Activated B cell treated with CpG ODN at 0.5 μM for 24 hours (primary cell): ENCODE measurements at regions of chr1 and their contacts with region 1.

Region 1: GRCh38 chr1:31938174-31938950 is at the start of gene PTP4A2:
- DNase-seq: peak; percentile 88
- ATAC-seq: peak; percentile 78
- H3K4me3 Mint-ChIP-seq: peak within 1 kb of the TSS; percentile 91
- H3K27ac Mint-ChIP-seq: peak within 1 kb of the TSS; percentile 93
- H3K4me1 Mint-ChIP-seq: peaks cover 77% of the 10 kb centered on the region
- H3K27me3 Mint-ChIP-seq: no peaks in the 10 kb centered on the region
- CTCF ChIP-seq: no peak
- total RNA-seq, gene PTP4A2: 249 and 275 TPM in 2 replicates

Region 2: GRCh38 chr1:31815752-31816500 is 122.4 kb before region 1 on chr1 and contains the start of gene SPOCD1:
- CTCF ChIA-PET with region 1: interaction called, 4 read pairs
- POLR2A ChIA-PET with region 1: interaction called, 4 read pairs
- intact Hi-C with region 1: loop called (anchors 2 kb)
- DNase-seq: peak; percentile 55
- ATAC-seq: peak; percentile 81
- H3K4me3 Mint-ChIP-seq: no peak within 1 kb of the TSS
- H3K27ac Mint-ChIP-seq: no peak within 1 kb of the TSS
- H3K4me1 Mint-ChIP-seq: peaks cover 26% of the 10 kb centered on the region
- H3K27me3 Mint-ChIP-seq: no peaks in the 10 kb centered on the region
- CTCF ChIP-seq: no peak
- total RNA-seq, gene SPOCD1: not detected in 2 replicates

Region 3: DNA sequence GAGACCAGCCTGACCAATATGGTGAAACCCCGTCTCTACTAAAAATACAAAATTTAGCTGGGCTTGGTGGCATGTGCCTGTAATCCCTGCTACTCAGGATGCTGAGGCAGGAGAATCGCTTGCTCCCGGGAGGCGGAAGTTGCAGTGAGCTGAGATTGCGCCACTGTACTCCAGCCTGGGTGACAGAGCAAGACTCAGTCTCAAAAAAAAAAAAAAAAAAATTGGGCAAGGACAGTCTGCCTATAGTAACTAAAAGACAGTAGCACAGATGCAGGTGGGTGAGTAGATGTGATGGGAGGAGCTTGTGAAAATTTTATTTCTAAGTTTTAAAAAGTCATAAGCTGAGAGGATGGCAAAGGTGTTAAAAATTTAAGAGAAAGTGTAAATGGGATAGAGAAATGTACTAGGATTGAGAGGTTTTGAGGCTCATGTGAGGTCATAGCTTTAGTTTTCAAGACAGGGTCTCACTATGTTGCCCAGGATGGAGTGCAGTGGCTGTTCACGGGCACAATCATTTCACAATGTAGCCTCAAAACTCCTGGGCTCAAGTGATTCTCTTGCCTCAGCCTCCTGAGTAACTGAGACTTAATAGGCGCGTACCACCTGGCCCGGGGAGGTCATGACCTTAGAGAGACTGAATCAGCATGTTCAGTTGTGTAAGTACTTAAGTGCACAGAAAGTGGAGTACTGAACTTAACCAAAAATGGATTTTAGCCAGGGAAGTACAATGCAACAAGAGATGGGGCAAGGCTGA is 33.8 kb before region 1 on chr1:
- CTCF ChIA-PET with region 1: interaction called, 3 read pairs
- POLR2A ChIA-PET with region 1: interaction called, 23 read pairs
- intact Hi-C with region 1: no loop called
- DNase-seq: no peak
- ATAC-seq: no peak
- H3K4me3 Mint-ChIP-seq: no peak overlapping the region
- H3K27ac Mint-ChIP-seq: peak overlapping the region; percentile 32
- H3K4me1 Mint-ChIP-seq: peaks cover 28% of the 10 kb centered on the region
- H3K27me3 Mint-ChIP-seq: no peaks in the 10 kb centered on the region
- CTCF ChIP-seq: no peak

Region 4: GRCh38 chr1:31923901-31924535 is 14.3 kb before region 1 on chr1:
- CTCF ChIA-PET with region 1: interaction called, 3 read pairs
- POLR2A ChIA-PET with region 1: interaction called, 36 read pairs
- intact Hi-C with region 1: loop called (anchors 2 kb)
- DNase-seq: no peak
- ATAC-seq: no peak
- H3K4me3 Mint-ChIP-seq: no peak overlapping the region
- H3K27ac Mint-ChIP-seq: peak overlapping the region; percentile 30
- H3K4me1 Mint-ChIP-seq: peaks cover 82% of the 10 kb centered on the region
- H3K27me3 Mint-ChIP-seq: no peaks in the 10 kb centered on the region
- CTCF ChIP-seq: no peak

Region 5: DNA sequence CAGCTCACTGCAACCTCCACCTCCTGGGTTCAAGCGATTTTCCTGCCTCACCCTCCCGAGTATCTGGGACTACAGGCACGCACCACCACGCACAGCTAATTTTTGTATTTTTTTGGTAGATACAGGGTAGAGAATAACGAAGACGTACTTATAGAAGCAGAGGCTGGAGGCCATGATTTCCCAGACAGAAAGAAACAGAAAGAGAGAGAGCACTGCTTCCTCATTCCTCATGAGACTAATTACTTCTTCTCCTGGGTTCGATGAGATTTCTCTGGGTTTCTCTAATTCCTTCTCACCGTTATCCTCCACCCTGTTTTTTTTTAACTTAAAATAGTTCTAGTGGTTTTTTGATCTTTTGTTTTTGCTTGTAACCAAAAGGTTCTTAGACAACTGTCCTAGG is 23.2 kb after region 1 on chr1:
- CTCF ChIA-PET with region 1: interaction called, 75 read pairs
- POLR2A ChIA-PET with region 1: interaction called, 235 read pairs
- intact Hi-C with region 1: loop called (anchors 1 kb)
- DNase-seq: no peak
- ATAC-seq: no peak
- H3K4me3 Mint-ChIP-seq: peak overlapping the region; percentile 37
- H3K27ac Mint-ChIP-seq: peak overlapping the region; percentile 90
- H3K4me1 Mint-ChIP-seq: peaks cover 39% of the 10 kb centered on the region
- H3K27me3 Mint-ChIP-seq: no peaks in the 10 kb centered on the region
- CTCF ChIP-seq: no peak